H1 (cell line): ENCODE measurements at regions of chr11 and their contacts with region 1.

Region 1: GRCh38 chr11:33829433-33830141 is 55.3 kb upstream of the FBXO3 start:
- DNase-seq: peak in 1 of 2 experiments; percentile 79
- H3K4me3 ChIP-seq: peak overlapping the region; percentile 39 to 70 (median 49)
- H3K27ac ChIP-seq: no peak overlapping the region
- H3K4me1 ChIP-seq: peaks cover 0 to 4% (median 2%) of the 10 kb centered on the region in 4 experiments; a peak in 1 of 7 replicates
- H3K27me3 ChIP-seq: peaks cover 4 to 23% (median 13%) of the 10 kb centered on the region in 4 experiments
- CTCF ChIP-seq: peak; percentile 33 to 86 (median 76)
- EP300 ChIP-seq: no peak
- POLR2A ChIP-seq: no peak
- RAD21 ChIP-seq: peak; percentile 90 to 92

Region 2: DNA sequence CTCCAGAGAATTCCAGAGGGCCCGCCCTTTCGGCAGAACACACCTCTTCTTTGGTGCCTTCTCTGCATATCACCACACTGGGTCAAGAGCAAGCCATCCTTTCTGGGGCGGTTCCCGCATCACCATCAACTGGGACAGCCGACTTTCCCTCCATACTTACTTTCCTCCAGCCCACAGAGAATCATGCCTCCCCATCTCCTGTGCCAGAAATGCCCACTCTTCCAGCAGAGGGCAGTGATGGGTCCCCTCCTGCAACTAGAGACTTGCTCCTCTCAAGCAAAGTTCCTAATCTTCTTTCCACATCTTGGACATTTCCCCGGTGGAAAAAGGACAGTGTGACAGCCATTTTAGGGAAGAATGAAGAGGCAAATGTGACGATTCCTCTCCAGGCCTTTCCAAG is 286.7 kb before region 1 on chr11:
- CTCF ChIA-PET with region 1: interaction called, 11 read pairs
- POLR2A ChIA-PET with region 1: no interaction called
- DNase-seq: peak; percentile 34 to 82
- H3K4me3 ChIP-seq: no peak overlapping the region
- H3K27ac ChIP-seq: no peak overlapping the region
- H3K4me1 ChIP-seq: no peaks in the 10 kb centered on the region
- H3K27me3 ChIP-seq: no peaks in the 10 kb centered on the region
- CTCF ChIP-seq: peak; percentile 83 to 89 (median 85)
- EP300 ChIP-seq: no peak
- POLR2A ChIP-seq: no peak
- RAD21 ChIP-seq: peak; percentile 70 to 83

Region 3: GRCh38 chr11:33716236-33716635 is 113.4 kb before region 1 on chr11:
- CTCF ChIA-PET with region 1: interaction called, 25 read pairs
- POLR2A ChIA-PET with region 1: no interaction called
- DNase-seq: no peak
- H3K4me3 ChIP-seq: no peak overlapping the region
- H3K27ac ChIP-seq: no peak overlapping the region
- H3K4me1 ChIP-seq: no peaks in the 10 kb centered on the region
- H3K27me3 ChIP-seq: no peaks in the 10 kb centered on the region
- CTCF ChIP-seq: peak in 2 of 3 experiments; percentile 21 to 29; a peak in 2 of 4 replicates
- EP300 ChIP-seq: no peak
- POLR2A ChIP-seq: no peak
- RAD21 ChIP-seq: peak; percentile 54 to 56

Region 4: DNA sequence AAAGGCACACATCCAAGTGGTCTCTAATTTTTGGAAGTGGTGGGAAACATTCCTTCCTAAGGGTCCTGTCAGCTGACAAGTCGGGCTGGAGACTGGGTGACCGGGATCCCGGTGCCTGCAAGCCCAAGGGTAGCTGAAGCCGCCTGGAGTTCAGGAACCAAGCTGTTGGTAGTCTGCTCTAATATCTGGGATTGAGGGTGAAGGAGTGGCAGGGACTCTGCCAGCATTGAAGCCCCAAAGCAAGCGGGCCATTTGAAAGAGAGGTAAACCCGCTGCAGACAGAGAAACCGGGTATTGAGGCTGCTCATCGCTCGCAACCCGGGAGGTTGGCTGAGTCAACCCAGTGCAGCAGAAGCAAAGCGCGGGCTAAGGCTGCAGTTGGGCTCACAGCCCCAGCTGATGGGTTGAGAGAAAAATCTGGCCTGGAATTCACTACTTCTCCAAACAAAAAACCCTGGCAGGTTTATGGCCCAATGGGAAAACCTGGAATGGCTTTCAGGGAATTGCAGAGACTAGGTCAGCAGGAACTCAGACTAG is 27.1 kb before region 1 on chr11:
- CTCF ChIA-PET with region 1: interaction called, 195 read pairs
- POLR2A ChIA-PET with region 1: interaction called, 3 read pairs
- DNase-seq: peak; percentile 67 to 83
- H3K4me3 ChIP-seq: peak overlapping the region; percentile 60 to 71 (median 68)
- H3K27ac ChIP-seq: no peak overlapping the region
- H3K4me1 ChIP-seq: no peaks in the 10 kb centered on the region; a peak in 2 of 7 replicates
- H3K27me3 ChIP-seq: peaks cover 0 to 4% (median 2%) of the 10 kb centered on the region in 4 experiments; a peak in 3 of 7 replicates
- CTCF ChIP-seq: 0 out of 4 replicates have a peak, but pooled peaks of 1 of the 3 experiments have one; percentile 19
- EP300 ChIP-seq: peak in 1 of 2 experiments; percentile 89; a peak in 1 of 3 replicates
- POLR2A ChIP-seq: peak in 1 of 2 experiments; percentile 46; a peak in 1 of 3 replicates
- RAD21 ChIP-seq: peak; percentile 12 to 37

Region 5: DNA sequence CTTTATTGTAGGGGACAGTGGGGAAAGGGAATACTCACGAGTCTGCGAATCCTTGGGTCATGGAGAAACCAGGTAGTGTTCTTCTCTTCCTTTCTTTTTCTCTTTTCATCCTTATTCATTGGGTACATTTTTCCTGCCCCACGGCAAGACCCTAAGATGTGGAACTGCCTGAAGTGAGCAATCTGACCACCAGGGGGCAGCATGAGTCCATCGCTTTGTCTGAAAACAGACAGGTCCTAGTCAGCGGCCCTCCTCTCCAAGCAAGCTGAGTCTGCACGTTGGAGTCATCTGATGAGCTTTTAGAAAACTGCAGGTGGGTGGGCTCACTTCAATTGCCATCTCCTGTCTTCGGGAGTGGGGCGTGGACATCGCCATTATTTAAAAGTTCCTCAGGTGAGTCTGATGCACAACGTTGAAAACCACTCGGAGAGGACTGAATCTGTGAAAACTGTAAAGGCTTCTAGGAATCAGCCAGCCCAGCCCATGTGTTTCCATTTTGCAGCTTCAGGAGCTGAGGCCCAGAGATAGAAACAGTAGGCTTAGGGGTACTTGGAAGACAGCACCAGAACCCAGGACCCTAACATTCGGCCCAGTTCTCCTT is 21.3 kb before region 1 on chr11:
- CTCF ChIA-PET with region 1: interaction called, 195 read pairs
- POLR2A ChIA-PET with region 1: no interaction called
- DNase-seq: peak; percentile 80 to 99
- H3K4me3 ChIP-seq: no peak overlapping the region
- H3K27ac ChIP-seq: no peak overlapping the region
- H3K4me1 ChIP-seq: no peaks in the 10 kb centered on the region
- H3K27me3 ChIP-seq: no peaks in the 10 kb centered on the region
- CTCF ChIP-seq: peak; percentile 84 to 89 (median 85)
- EP300 ChIP-seq: no peak
- POLR2A ChIP-seq: no peak
- RAD21 ChIP-seq: peak; percentile 91 to 92

Region 6: GRCh38 chr11:33819278-33819677 is 10.3 kb before region 1 on chr11:
- CTCF ChIA-PET with region 1: interaction called, 40 read pairs
- POLR2A ChIA-PET with region 1: interaction called, 4 read pairs
- DNase-seq: no peak
- H3K4me3 ChIP-seq: no peak overlapping the region
- H3K27ac ChIP-seq: no peak overlapping the region
- H3K4me1 ChIP-seq: no peaks in the 10 kb centered on the region
- H3K27me3 ChIP-seq: no peaks in the 10 kb centered on the region
- CTCF ChIP-seq: no peak
- EP300 ChIP-seq: no peak
- POLR2A ChIP-seq: no peak
- RAD21 ChIP-seq: no peak

Region 7: DNA sequence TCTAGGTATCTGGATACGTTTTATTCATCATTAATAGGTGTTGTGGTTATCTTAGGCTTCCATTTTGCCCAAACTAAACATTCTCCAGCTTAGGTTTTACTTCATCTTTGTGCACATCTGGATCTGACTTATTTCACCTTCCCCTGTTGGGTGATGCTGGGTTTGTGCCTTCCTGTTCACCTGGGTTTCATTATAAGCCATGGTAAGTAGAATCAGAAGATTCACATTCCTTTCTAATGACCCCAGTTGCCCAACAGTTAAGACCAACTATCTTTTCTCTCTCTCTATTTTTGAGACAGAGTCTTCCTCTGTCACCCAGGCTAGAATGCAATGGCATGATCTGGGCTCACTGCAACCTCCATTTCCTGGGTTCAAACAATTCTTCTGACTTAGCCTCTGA is 17.7 kb after region 1 on chr11:
- CTCF ChIA-PET with region 1: interaction called, 17 read pairs
- POLR2A ChIA-PET with region 1: no interaction called
- DNase-seq: no peak
- H3K4me3 ChIP-seq: no peak overlapping the region
- H3K27ac ChIP-seq: no peak overlapping the region
- H3K4me1 ChIP-seq: peaks cover 0 to 1% (median 0%) of the 10 kb centered on the region in 4 experiments; a peak in 2 of 7 replicates
- H3K27me3 ChIP-seq: no peaks in the 10 kb centered on the region
- CTCF ChIP-seq: no peak
- EP300 ChIP-seq: no peak
- POLR2A ChIP-seq: no peak
- RAD21 ChIP-seq: no peak

Region 8: DNA sequence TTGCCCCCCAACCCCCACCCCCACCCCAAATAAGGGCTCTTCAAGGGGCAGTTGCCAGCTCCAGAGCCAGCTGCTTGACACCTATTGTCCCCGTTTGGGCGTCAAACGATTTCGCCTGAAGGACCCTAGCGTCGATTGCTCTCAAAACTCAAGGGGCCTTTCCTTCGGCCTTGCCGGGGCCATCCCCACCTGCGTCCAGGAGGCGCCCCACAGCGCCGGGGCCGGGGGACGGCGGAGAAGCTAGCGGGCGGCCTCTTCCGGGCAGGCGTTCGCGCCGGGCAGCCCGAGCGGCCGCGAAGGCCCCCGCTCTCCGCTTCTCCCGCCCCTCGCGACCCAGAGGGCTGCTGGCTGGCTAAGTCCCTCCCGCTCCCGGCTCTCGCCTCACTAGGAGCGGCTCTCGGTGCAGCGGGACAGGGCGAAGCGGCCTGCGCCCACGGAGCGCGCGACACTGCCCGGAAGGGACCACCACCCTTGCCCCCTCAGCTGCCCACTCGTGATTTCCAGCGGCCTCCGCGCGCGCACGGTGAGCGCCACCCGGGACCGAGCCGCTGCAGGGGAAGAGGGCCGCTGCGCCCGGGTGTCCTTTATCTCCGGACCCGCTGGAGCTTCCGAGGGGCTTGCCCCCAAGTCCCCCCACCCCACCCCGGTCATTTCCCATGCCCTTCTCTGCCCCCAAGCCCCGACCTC is 221.9 kb after region 1 on chr11 and contains the start of gene CAPRIN1:
- CTCF ChIA-PET with region 1: no interaction called
- POLR2A ChIA-PET with region 1: no interaction called
- DNase-seq: peak; percentile 84 to 86
- H3K4me3 ChIP-seq: peak within 1 kb of the TSS; percentile 86 to 96 (median 94)
- H3K27ac ChIP-seq: peak within 1 kb of the TSS; percentile 97
- H3K4me1 ChIP-seq: peaks cover 0 to 3% (median 3%) of the 10 kb centered on the region in 4 experiments; a peak in 4 of 7 replicates
- H3K27me3 ChIP-seq: no peaks in the 10 kb centered on the region
- CTCF ChIP-seq: no peak
- EP300 ChIP-seq: 0 out of 3 replicates have a peak, but pooled peaks of 1 of the 2 experiments have one; percentile 15
- POLR2A ChIP-seq: peak; percentile 71 to 81
- RAD21 ChIP-seq: no peak
- total RNA-seq, gene CAPRIN1: 295 and 317 TPM in 2 replicates